IMR-90 (cell line): ENCODE measurements at regions of chr12 and their contacts with region 1.

Region 1: GRCh38 chr12:132600048-132601032 is 10.0 kb downstream of the LRCOL1 start:
- DNase-seq: peak; percentile 61
- ATAC-seq: peak; percentile 83
- H3K4me3 ChIP-seq: peak overlapping the region; percentile 34
- H3K27ac ChIP-seq: no peak overlapping the region
- H3K4me1 ChIP-seq: peaks cover 11% of the 10 kb centered on the region; the same call in 1 of the 2 replicates
- H3K27me3 ChIP-seq: peaks cover 19% of the 10 kb centered on the region; the same call in 1 of the 2 replicates
- CTCF ChIP-seq: peak; percentile 82
- POLR2A ChIP-seq: no peak
- RAD21 ChIP-seq: peak; percentile 73

Region 2: DNA sequence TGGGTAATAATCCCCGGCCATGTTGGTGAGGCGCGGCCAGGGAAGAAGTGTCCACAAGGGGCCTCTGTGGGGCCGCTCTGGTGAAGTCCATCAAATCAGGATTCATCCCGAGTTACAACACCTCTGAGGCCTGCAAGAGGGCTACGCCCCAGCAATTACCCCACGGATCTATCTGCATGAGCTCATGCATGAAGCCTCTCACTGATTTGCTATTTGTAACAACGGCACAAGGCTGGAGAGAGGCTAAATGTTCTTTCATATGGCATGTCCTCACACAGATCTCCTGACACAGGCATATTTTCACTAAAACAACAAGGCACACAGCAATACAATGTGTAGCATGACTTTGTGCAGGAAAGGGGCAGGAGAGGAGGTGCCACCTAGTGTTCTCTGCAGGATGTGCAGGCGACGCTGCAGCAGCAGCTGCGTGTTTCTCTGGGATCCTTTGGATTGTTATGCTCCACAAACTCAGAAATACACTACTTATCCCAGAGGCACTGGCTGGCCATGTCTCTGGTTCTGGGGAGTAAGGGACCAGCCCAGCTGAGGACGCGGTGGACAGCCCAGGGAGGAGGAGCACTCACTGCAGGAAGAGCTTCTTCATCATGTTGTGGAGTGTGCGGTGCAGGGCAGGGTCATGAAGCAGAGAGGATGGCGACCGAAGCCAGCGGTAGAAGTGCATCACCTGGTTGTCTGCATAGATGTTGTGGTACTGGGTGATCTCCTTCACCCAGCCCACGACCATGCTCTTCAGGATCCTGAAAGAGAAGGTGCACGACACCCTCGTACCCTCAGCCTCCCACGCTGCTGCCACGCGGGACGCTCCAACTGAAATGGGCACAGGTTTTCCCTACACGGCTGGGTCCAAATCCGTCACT is 38.4 kb after region 1 on chr12:
- CTCF ChIA-PET with region 1: no interaction called
- POLR2A ChIA-PET with region 1: no interaction called
- dilution Hi-C with region 1: no loop called
- in situ Hi-C with region 1: no loop called
- intact Hi-C with region 1: loop called (anchors 1 kb)
- DNase-seq: peak; percentile 60
- ATAC-seq: peak; percentile 99
- H3K4me3 ChIP-seq: no peak overlapping the region
- H3K27ac ChIP-seq: no peak overlapping the region
- H3K4me1 ChIP-seq: no peaks in the 10 kb centered on the region
- H3K27me3 ChIP-seq: no peaks in the 10 kb centered on the region
- CTCF ChIP-seq: peak; percentile 75
- POLR2A ChIP-seq: no peak
- RAD21 ChIP-seq: peak; percentile 65